Common myeloid progenitor, CD34-positive (primary cell): ENCODE measurements at regions of chr10 and their contacts with region 1.

Region 1: DNA sequence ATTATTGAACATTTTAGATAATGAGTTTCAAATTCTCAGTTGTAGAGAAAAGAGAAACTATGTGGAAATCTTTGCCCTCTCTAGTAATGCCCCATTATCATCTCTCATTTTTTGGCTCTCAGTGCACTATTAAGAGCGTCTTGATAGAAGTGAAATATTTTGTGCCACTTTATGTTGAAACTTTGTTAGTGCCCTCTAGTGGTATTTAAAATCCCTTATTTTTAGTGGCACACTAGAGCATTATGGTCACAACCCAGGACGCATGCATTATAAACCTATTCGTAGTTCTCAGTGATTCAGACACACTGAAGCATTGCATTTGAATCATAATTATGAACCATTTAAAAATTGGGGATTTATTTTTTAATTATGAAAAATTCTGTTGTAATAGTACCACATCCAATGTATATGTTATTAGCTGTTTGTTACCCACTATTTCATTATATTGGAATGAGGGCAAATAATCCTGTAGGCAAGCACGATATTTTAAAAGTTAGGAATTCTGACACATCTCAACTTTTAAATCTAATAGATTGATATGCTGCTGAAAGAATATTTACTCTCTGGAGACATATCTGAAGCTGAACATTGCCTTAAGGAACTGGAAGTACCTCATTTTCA is 21.9 kb downstream of the PDCD4 start:
- DNase-seq: peak; percentile 58 to 83 (median 78)
- H3K4me3 ChIP-seq: no peak overlapping the region
- H3K27ac ChIP-seq: no peak overlapping the region
- H3K4me1 ChIP-seq: no peaks in the 10 kb centered on the region
- H3K27me3 ChIP-seq: no peaks in the 10 kb centered on the region

Region 2: GRCh38 chr10:110746254-110746826 is 147.3 kb before region 1 on chr10:
- CTCF ChIA-PET with region 1: interaction called, 22 read pairs
- POLR2A ChIA-PET with region 1: no interaction called
- DNase-seq: peak; percentile 50 to 72 (median 66)
- H3K4me3 ChIP-seq: no peak overlapping the region
- H3K27ac ChIP-seq: no peak overlapping the region
- H3K4me1 ChIP-seq: peaks cover 0 to 6% (median 5%) of the 10 kb centered on the region in 4 experiments
- H3K27me3 ChIP-seq: peaks cover 0 to 3% (median 0%) of the 10 kb centered on the region in 5 experiments

Region 3: DNA sequence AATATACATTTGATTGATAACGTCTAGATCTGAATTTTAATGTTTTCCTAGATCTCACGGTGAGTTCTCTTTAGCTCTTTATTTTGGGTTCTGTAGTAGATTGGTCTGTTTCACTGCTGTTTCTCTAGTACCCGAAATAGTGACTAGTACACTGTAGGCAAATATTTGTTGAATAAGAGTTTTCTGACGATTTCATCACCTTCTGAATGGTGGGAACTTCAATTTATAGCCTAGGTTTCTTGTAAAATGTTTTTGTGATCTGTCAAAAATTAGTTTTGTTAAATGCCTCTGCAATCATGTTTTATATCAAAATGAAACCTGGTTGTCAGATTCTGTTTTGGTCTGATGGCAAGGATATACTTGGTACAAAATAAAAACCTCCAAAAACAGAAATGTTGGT is 11.8 kb before region 1 on chr10:
- CTCF ChIA-PET with region 1: interaction called, 11 read pairs
- POLR2A ChIA-PET with region 1: no interaction called
- DNase-seq: no peak
- H3K4me3 ChIP-seq: no peak overlapping the region
- H3K27ac ChIP-seq: peak overlapping the region in 1 of 2 experiments; percentile 37
- H3K4me1 ChIP-seq: peaks cover 0 to 4% (median 1%) of the 10 kb centered on the region in 4 experiments
- H3K27me3 ChIP-seq: no peaks in the 10 kb centered on the region